CD8-positive, alpha-beta T cell (primary cell): ENCODE measurements at regions of chr14 and their contacts with region 1.

Region 1: DNA sequence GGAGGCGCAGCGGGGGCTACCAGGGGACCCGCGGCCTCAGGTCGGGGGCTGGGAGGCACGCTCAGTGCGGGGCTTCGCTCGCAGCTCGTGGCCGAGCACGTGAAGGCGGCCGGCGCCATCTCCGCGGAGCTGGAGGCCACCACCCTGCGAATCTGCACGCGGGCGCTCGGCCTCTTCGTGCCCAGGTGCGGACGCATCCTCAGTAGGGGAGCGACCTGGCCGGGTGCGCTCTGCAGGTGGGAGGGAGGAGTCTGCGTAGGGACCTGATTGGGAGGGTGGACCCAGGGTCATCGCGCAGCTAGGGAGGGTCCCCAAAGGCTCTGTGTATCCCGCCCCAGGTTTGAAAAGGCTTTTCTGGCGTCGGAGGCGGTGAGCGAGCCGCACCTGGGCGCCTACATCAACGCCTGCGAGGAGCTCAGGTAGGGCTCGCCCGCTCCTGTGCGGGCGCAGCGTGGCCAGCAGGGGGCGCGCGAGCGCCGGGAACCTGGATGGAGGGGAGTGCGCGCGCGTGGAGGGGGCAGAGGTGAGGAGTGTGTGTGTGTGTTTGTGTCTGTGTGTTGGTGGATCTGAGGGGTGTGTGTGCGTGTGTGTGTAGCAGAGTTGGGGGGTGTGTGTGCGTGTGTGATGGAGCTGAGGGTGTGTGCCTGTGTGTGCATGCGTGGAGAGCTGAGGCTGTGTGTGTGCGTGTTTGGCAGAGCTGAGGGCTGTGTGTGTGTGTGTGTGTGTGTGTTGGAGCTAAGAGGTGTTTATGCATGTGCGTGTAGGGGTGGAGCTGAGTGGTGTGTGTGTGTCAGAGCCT is 10.3 kb downstream of the EXOC3L4 start:
- DNase-seq: peak; percentile 55 to 85 (median 74)
- ATAC-seq: peak; percentile 89
- H3K4me3 ChIP-seq: no peak overlapping the region
- H3K4me3 Mint-ChIP-seq: no peak overlapping the region
- H3K27ac ChIP-seq: no peak overlapping the region
- H3K27ac Mint-ChIP-seq: peak overlapping the region; percentile 32
- H3K4me1 ChIP-seq: peaks cover 3% of the 10 kb centered on the region
- H3K4me1 Mint-ChIP-seq: peaks cover 9% of the 10 kb centered on the region
- H3K27me3 ChIP-seq: peaks cover 7 to 22% of the 10 kb centered on the region in 2 experiments
- H3K27me3 Mint-ChIP-seq: peaks cover 17% of the 10 kb centered on the region
- CTCF ChIP-seq: peak; percentile 71

Region 2: GRCh38 chr14:103091041-103091882 is 13.6 kb before region 1 on chr14:
- CTCF ChIA-PET with region 1: interaction called, 37 read pairs
- POLR2A ChIA-PET with region 1: interaction called, 3 read pairs
- intact Hi-C with region 1: no loop called
- DNase-seq: peak; percentile 58 to 87 (median 80)
- ATAC-seq: peak; percentile 94
- H3K4me3 ChIP-seq: peak overlapping the region; percentile 26 to 50
- H3K4me3 Mint-ChIP-seq: peak overlapping the region; percentile 63
- H3K27ac ChIP-seq: no peak overlapping the region
- H3K27ac Mint-ChIP-seq: no peak overlapping the region
- H3K4me1 ChIP-seq: peaks cover 11% of the 10 kb centered on the region
- H3K4me1 Mint-ChIP-seq: peaks cover 6% of the 10 kb centered on the region
- H3K27me3 ChIP-seq: no peaks in the 10 kb centered on the region
- H3K27me3 Mint-ChIP-seq: peaks cover 2% of the 10 kb centered on the region
- CTCF ChIP-seq: peak; percentile 68

Region 3: DNA sequence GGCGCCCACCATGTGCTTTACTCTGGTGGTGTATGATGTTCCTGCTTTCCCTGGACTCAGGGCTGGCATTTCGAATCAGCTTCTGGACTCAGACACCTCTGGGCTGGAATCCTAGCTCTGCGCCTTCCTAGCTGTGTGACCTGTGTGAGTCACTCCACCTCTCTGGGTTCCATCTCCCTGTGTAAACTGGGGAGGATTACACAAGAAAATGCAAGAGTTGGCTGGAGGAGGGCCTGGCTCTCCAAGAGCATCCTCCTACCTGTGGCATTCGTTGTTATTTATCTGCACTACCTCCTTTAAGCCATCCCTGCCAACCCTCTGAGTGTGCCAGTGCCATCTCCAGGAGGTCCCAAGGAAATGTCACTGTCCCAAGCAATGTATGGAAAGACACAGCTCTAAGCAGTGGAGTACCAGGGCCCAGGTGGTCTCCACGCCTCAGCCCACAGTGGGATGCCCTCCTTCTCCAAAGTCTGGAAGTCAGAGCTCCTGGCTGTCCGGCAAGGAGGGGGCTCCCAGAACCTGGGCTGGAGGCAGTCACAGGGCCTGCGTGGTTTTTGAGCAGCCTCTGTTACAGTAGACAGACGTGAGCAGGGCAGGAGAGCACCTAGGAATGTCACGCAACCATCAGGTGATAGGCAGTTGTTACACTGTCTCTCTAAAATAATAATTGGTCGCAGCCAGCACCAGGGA is 11.2 kb after region 1 on chr14:
- CTCF ChIA-PET with region 1: interaction called, 12 read pairs
- POLR2A ChIA-PET with region 1: no interaction called
- intact Hi-C with region 1: no loop called
- DNase-seq: no peak
- ATAC-seq: no peak
- H3K4me3 ChIP-seq: no peak overlapping the region
- H3K4me3 Mint-ChIP-seq: no peak overlapping the region
- H3K27ac ChIP-seq: no peak overlapping the region
- H3K27ac Mint-ChIP-seq: no peak overlapping the region
- H3K4me1 ChIP-seq: no peaks in the 10 kb centered on the region
- H3K4me1 Mint-ChIP-seq: peaks cover 4% of the 10 kb centered on the region
- H3K27me3 ChIP-seq: no peaks in the 10 kb centered on the region
- H3K27me3 Mint-ChIP-seq: peaks cover 8% of the 10 kb centered on the region
- CTCF ChIP-seq: no peak

Region 4: GRCh38 chr14:103185051-103185992 is 80.5 kb after region 1 on chr14:
- CTCF ChIA-PET with region 1: interaction called, 36 read pairs
- POLR2A ChIA-PET with region 1: no interaction called
- intact Hi-C with region 1: loop called (anchors 1 to 2 kb)
- DNase-seq: peak in 2 of 9 experiments; percentile 32 to 49
- ATAC-seq: no peak
- H3K4me3 ChIP-seq: no peak overlapping the region
- H3K4me3 Mint-ChIP-seq: no peak overlapping the region
- H3K27ac ChIP-seq: no peak overlapping the region
- H3K27ac Mint-ChIP-seq: no peak overlapping the region
- H3K4me1 ChIP-seq: peaks cover 6% of the 10 kb centered on the region
- H3K4me1 Mint-ChIP-seq: peaks cover 11% of the 10 kb centered on the region
- H3K27me3 ChIP-seq: peaks cover 0 to 4% of the 10 kb centered on the region in 2 experiments
- H3K27me3 Mint-ChIP-seq: peaks cover 48% of the 10 kb centered on the region
- CTCF ChIP-seq: peak; percentile 72

Region 5: DNA sequence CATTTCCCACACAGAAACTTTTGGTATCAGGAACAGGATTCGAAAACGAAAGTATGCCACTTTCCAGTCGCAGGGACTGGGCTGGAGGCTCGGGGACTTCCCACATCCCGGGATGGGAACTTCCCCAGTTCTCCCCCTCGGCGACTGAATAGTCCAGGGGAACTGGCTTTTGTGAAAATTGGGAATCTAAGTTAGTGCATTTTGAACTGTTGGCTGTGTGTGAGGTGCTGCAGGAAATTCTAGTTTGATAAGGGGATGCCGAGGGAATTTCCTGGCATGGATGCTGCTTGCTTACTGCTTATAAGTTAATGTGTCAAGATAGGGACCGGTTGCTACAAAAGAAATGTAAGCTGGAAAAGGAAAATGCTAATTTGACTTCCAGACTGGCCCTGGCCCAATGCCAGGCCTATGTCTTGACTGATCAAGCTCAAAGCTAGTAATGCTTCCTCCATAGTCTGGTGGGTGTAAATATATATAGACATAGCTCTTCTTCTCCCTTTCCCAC is 155.8 kb after region 1 on chr14:
- CTCF ChIA-PET with region 1: no interaction called
- POLR2A ChIA-PET with region 1: no interaction called
- intact Hi-C with region 1: no loop called
- DNase-seq: peak in 1 of 9 experiments; percentile 19
- ATAC-seq: no peak
- H3K4me3 ChIP-seq: peak overlapping the region; percentile 14 to 20
- H3K4me3 Mint-ChIP-seq: peak overlapping the region; percentile 57
- H3K27ac ChIP-seq: no peak overlapping the region
- H3K27ac Mint-ChIP-seq: no peak overlapping the region
- H3K4me1 ChIP-seq: no peaks in the 10 kb centered on the region
- H3K4me1 Mint-ChIP-seq: peaks cover 8% of the 10 kb centered on the region
- H3K27me3 ChIP-seq: no peaks in the 10 kb centered on the region
- H3K27me3 Mint-ChIP-seq: peaks cover 10% of the 10 kb centered on the region
- CTCF ChIP-seq: no peak

Region 6: DNA sequence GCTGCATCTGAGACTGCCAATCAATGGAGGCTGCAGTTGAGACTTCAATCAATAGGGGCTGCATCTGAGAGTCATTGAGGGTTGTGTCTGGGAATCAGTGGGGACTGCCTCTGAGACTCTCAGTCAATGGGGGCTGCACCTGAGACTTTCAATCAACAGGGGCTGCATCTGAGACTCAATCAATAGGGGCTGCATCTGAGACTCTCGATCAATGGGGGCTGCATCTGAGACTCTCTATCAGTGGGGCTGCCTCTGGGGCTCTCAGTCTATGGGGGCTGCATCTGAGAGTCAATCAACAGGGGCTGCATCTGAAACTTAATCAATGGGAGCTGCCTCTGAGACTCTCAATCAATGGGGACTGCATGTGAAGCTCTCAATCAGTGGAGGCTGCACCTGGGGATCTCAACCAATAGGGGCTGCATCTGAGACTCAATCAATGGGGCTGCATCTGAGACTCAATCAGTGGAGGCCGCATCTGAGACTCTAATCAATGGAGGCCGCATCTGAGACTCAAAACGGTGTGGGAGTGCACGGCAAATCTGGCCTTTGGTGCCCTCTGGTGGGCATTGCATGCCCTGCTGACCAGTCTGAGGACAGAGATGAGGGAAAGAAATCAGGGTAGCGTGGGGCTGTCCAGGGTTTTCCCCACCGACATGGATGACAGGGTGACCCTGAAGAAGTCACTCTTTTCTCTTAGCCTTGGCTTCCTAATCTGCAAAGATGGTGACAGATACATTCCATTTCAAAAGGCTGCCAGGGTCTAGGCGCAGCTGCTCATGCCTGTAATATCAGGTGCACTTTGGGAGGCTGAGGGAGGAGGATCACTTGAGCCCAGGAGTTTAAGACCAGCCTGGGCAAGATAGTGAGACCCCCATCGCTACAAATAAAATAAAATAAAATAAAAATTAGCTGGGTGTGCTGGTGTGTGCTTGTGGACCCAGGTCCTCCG is 187.8 kb after region 1 on chr14:
- CTCF ChIA-PET with region 1: interaction called, 77 read pairs
- POLR2A ChIA-PET with region 1: no interaction called
- intact Hi-C with region 1: loop called in 1 of 2 experiments (anchors 1 kb)
- DNase-seq: peak; percentile 39 to 82 (median 73)
- ATAC-seq: peak; percentile 86
- H3K4me3 ChIP-seq: no peak overlapping the region
- H3K4me3 Mint-ChIP-seq: no peak overlapping the region
- H3K27ac ChIP-seq: no peak overlapping the region
- H3K27ac Mint-ChIP-seq: no peak overlapping the region
- H3K4me1 ChIP-seq: no peaks in the 10 kb centered on the region
- H3K4me1 Mint-ChIP-seq: no peaks in the 10 kb centered on the region
- H3K27me3 ChIP-seq: peaks cover 0 to 2% of the 10 kb centered on the region in 2 experiments
- H3K27me3 Mint-ChIP-seq: peaks cover 15% of the 10 kb centered on the region
- CTCF ChIP-seq: peak; percentile 80

Region 7: DNA sequence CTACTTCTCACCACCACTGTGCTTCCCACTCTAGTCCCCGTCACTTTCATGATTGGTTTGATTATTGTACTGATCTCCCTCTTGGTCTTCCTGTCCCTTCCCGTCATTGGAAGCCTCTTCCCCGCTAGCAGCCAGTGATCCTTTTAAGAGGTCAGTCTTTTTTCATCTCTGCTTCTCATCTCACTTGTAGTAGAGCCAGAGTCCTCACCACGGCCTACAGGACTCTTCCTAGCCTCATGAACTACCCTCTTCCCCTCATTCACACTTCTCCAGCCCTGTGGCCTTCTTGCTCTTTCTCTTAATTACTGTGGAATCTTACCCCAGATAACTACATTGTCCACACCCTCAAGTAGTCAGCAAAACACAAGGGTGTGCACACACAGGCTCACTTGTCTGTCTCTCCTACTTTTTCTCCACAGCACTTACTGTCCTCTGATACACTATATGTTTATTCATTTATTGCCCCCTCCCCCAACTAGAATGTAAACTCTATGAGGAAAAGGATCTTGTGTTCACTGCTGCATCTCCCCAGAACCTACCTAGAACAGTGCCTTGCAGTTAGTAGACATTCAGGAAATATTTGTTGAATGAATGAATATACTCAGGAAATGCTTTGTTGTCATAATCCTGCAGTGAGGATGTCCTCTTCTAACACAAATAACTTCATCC is 351.4 kb after region 1 on chr14:
- CTCF ChIA-PET with region 1: no interaction called
- POLR2A ChIA-PET with region 1: no interaction called
- intact Hi-C with region 1: no loop called
- DNase-seq: no peak
- ATAC-seq: no peak
- H3K4me3 ChIP-seq: no peak overlapping the region
- H3K4me3 Mint-ChIP-seq: no peak overlapping the region
- H3K27ac ChIP-seq: no peak overlapping the region
- H3K27ac Mint-ChIP-seq: peak overlapping the region; percentile 80
- H3K4me1 ChIP-seq: peaks cover 14% of the 10 kb centered on the region
- H3K4me1 Mint-ChIP-seq: peaks cover 39% of the 10 kb centered on the region
- H3K27me3 ChIP-seq: no peaks in the 10 kb centered on the region
- H3K27me3 Mint-ChIP-seq: no peaks in the 10 kb centered on the region
- CTCF ChIP-seq: no peak

Region 8: GRCh38 chr14:103546652-103547454 is 442.0 kb after region 1 on chr14:
- CTCF ChIA-PET with region 1: interaction called, 3 read pairs
- POLR2A ChIA-PET with region 1: no interaction called
- intact Hi-C with region 1: loop called in 1 of 2 experiments (anchors 2 kb)
- DNase-seq: peak; percentile 57 to 87 (median 80)
- ATAC-seq: peak; percentile 91
- H3K4me3 ChIP-seq: no peak overlapping the region
- H3K4me3 Mint-ChIP-seq: no peak overlapping the region
- H3K27ac ChIP-seq: no peak overlapping the region
- H3K27ac Mint-ChIP-seq: no peak overlapping the region
- H3K4me1 ChIP-seq: peaks cover 5% of the 10 kb centered on the region
- H3K4me1 Mint-ChIP-seq: peaks cover 4% of the 10 kb centered on the region
- H3K27me3 ChIP-seq: peaks cover 0 to 4% of the 10 kb centered on the region in 2 experiments
- H3K27me3 Mint-ChIP-seq: peaks cover 2% of the 10 kb centered on the region
- CTCF ChIP-seq: peak; percentile 92

Region 9: GRCh38 chr14:103746701-103747100 is 641.8 kb after region 1 on chr14:
- CTCF ChIA-PET with region 1: no interaction called
- POLR2A ChIA-PET with region 1: no interaction called
- intact Hi-C with region 1: no loop called
- DNase-seq: no peak
- ATAC-seq: no peak
- H3K4me3 ChIP-seq: no peak overlapping the region
- H3K4me3 Mint-ChIP-seq: no peak overlapping the region
- H3K27ac ChIP-seq: no peak overlapping the region
- H3K27ac Mint-ChIP-seq: peak overlapping the region; percentile 52
- H3K4me1 ChIP-seq: peaks cover 17% of the 10 kb centered on the region
- H3K4me1 Mint-ChIP-seq: peaks cover 21% of the 10 kb centered on the region
- H3K27me3 ChIP-seq: no peaks in the 10 kb centered on the region
- H3K27me3 Mint-ChIP-seq: no peaks in the 10 kb centered on the region
- CTCF ChIP-seq: no peak